A549 (cell line): ENCODE measurements at regions of chr15 and their contacts with region 1.

Region 1: DNA sequence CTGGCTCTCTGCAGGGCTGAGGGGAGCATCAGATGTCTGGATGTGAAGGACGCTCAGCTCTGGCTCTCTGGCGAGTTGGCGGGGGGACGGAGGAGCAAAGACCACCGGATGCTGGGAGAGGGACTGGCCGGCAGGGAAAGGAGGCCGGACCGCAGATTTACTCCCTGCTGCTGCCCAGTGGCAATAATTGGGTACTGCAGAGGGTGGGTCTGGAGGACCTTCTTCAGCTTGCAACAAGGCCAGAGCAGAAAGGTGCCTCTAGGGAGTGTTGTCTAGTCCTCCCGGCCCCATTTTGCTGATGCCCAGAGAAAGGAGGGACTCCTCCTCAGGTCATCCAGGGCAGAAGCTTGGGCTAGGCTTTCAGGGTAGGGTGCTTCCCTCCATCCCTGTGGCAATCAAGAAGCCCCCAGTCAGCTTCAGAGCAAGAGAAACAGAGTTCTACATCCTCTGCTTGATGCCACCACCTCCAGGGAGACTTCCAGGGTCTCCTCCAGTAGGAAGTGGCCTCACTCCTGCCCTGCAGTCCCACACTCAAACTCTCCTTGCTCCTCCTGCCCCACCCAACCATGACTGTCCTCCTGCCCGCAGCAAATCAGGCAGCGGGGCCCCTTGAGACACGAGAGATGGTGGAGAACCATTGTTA is 20.3 kb upstream of the CSPG4 start:
- DNase-seq: peak; percentile 65 to 82
- ATAC-seq: peak; percentile 71 to 88
- H3K4me3 ChIP-seq: no peak overlapping the region
- H3K27ac ChIP-seq: peak overlapping the region in 1 of 2 experiments; percentile 58; a peak in 2 of 6 replicates
- H3K4me1 ChIP-seq: peaks cover 6% of the 10 kb centered on the region; the same call in 2 of the 3 replicates
- CTCF ChIP-seq: peak; percentile 59
- EP300 ChIP-seq: no peak
- POLR2A ChIP-seq: no peak
- RAD21 ChIP-seq: peak; percentile 49 to 65

Region 2: DNA sequence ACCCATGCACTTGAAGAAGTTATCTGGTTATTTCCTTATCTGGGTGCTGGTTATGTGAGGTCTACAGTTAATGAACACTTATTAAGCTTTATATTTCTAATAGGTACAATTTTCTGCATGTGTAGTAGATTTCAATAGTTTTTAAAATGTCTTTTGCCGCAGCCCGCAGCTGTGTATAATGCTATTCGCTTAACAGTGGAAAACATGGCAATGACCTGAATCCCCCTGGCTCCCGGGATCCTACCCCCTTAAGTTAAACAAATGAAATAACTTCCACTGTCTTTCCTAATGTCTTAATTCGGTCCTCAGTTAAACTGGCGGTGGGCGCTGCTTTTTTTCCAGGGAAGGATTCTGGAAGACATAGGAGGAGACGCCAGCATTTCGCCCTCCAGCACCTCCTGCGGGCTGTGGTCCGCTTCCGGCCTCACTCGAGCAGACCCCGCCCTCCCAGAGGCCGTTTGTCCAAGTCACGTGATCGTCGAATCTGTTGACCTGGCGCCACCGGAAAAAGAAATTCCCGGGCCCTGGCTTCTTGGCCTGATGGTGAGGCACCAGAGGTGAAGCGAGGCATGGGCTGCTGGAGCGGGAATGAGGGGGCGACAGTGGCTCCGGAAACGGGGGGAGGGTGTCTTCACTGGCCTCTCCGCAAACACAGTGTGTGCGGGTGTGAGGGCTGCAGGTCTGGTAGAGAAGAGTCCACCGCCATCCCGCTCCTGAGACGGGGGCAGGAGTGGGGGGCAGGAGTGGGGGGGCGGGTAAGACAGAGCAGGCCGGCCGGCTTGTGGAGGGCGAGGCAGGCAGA is 25.3 kb after region 1 on chr15:
- CTCF ChIA-PET with region 1: interaction called, 15 read pairs
- POLR2A ChIA-PET with region 1: interaction called, 4 read pairs
- DNase-seq: peak; percentile 94 to 98
- ATAC-seq: peak; percentile 96 to 99
- H3K4me3 ChIP-seq: peak overlapping the region; percentile 56
- H3K27ac ChIP-seq: peak overlapping the region; percentile 86 to 87
- H3K4me1 ChIP-seq: peaks cover 7% of the 10 kb centered on the region; the same call in 2 of the 3 replicates
- CTCF ChIP-seq: peak; percentile 37; the same call in 2 of the 3 replicates
- EP300 ChIP-seq: no peak
- POLR2A ChIP-seq: peak; percentile 71
- RAD21 ChIP-seq: 0 out of 5 replicates have a peak, but pooled peaks of 1 of the 2 experiments have one; percentile 10

Region 3: DNA sequence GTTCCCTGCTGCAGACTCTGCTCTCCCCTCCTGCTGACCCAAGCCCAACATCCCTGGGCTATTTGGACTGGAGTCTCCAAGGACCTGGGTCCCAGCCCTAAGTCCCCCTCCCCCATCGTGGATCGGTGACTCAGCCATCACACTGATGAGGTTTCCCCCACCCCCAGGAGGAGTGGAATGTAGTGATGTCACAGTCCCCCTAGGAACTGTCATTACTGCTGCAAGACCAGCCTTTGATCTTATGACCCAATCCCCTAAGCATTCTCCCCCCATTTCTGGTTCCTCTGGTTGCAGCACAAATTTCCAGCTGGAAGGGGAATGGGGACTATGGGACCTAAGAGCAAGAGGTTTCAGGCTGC is 43.1 kb after region 1 on chr15:
- CTCF ChIA-PET with region 1: interaction called, 12 read pairs
- POLR2A ChIA-PET with region 1: no interaction called
- DNase-seq: peak in 1 of 2 experiments; percentile 43
- ATAC-seq: 0 out of 6 replicates have a peak, but pooled peaks of 1 of the 2 experiments have one; percentile 39
- H3K4me3 ChIP-seq: no peak overlapping the region
- H3K27ac ChIP-seq: peak overlapping the region; percentile 69 to 87
- H3K4me1 ChIP-seq: peaks cover 40% of the 10 kb centered on the region
- CTCF ChIP-seq: no peak
- EP300 ChIP-seq: peak; percentile 20 to 67; a peak in 2 of 5 replicates
- POLR2A ChIP-seq: no peak
- RAD21 ChIP-seq: no peak

Region 4: GRCh38 chr15:75861750-75862402 is 128.9 kb after region 1 on chr15:
- CTCF ChIA-PET with region 1: no interaction called
- POLR2A ChIA-PET with region 1: no interaction called
- DNase-seq: no peak
- ATAC-seq: no peak
- H3K4me3 ChIP-seq: no peak overlapping the region
- H3K27ac ChIP-seq: no peak overlapping the region
- H3K4me1 ChIP-seq: peaks cover 8% of the 10 kb centered on the region; the same call in 1 of the 3 replicates
- CTCF ChIP-seq: no peak
- EP300 ChIP-seq: no peak
- POLR2A ChIP-seq: no peak
- RAD21 ChIP-seq: no peak